Natural killer cell (primary cell): ENCODE measurements at regions of chr1 and their contacts with region 1.

Region 1: DNA sequence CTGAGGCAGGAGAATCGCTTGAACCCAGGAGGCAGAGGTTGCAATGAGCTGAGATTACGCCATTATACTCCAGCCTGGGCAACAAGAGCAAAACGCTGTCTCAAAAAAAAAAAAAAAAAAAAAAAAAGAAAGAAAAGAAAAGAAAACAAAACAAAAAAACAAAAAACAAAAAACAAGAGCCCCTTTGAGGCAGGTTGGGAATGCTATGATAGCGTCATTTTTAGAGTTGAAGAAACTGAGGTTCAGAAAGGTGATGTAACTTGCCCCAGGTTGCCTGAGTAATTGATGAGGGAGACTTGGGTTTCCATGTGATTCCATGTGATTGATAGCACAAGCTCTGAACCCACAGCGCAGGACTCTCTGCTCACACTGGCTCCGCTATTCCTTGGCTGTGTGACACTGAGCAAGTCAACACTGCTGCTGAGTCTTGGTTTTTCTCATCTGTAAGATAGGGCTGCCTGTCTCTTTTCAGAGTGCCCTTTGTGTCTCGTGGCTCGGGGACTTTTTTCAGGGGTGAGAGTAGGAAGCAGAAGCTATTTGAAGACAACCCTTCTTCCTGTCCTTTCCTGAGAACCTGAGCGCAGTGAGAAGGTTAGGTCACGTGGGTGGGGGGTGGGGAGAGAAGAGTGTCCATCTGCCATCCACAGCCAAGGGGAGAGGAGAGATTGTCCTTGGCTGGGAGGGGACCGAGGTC is 2.5 kb downstream of the CNR2 start:
- DNase-seq: peak in 1 of 2 donors; percentile 47
- ATAC-seq: peak; percentile 21 to 45 (median 43)
- H3K4me3 ChIP-seq: peak overlapping the region; percentile 25
- H3K4me3 Mint-ChIP-seq: peak overlapping the region; percentile 87
- H3K27ac ChIP-seq: peak overlapping the region; percentile 70
- H3K27ac Mint-ChIP-seq: peak overlapping the region; percentile 50 to 89
- H3K4me1 ChIP-seq: peaks cover 82% of the 10 kb centered on the region
- H3K4me1 Mint-ChIP-seq: peaks cover 58 to 59% of the 10 kb centered on the region in 2 donors
- H3K27me3 ChIP-seq: no peaks in the 10 kb centered on the region
- H3K27me3 Mint-ChIP-seq: peaks cover 0 to 3% of the 10 kb centered on the region in 2 donors
- CTCF ChIP-seq: no peak

Region 2: GRCh38 chr1:23899070-23899469 is 11.6 kb before region 1 on chr1:
- intact Hi-C with region 1: loop called (anchors 2 kb)
- DNase-seq: peak in 1 of 2 donors; percentile 21
- ATAC-seq: peak; percentile 53 to 67 (median 59)
- H3K4me3 ChIP-seq: no peak overlapping the region
- H3K4me3 Mint-ChIP-seq: peak overlapping the region; percentile 65
- H3K27ac ChIP-seq: no peak overlapping the region
- H3K27ac Mint-ChIP-seq: peak overlapping the region in 1 of 2 donors; percentile 56
- H3K4me1 ChIP-seq: peaks cover 84% of the 10 kb centered on the region
- H3K4me1 Mint-ChIP-seq: peaks cover 34 to 44% of the 10 kb centered on the region in 2 donors
- H3K27me3 ChIP-seq: no peaks in the 10 kb centered on the region
- H3K27me3 Mint-ChIP-seq: peaks cover 30 to 31% of the 10 kb centered on the region in 2 donors
- CTCF ChIP-seq: no peak